Natural killer cell (primary cell): ENCODE measurements at regions of chr15 and their contacts with region 1.

Region 1: DNA sequence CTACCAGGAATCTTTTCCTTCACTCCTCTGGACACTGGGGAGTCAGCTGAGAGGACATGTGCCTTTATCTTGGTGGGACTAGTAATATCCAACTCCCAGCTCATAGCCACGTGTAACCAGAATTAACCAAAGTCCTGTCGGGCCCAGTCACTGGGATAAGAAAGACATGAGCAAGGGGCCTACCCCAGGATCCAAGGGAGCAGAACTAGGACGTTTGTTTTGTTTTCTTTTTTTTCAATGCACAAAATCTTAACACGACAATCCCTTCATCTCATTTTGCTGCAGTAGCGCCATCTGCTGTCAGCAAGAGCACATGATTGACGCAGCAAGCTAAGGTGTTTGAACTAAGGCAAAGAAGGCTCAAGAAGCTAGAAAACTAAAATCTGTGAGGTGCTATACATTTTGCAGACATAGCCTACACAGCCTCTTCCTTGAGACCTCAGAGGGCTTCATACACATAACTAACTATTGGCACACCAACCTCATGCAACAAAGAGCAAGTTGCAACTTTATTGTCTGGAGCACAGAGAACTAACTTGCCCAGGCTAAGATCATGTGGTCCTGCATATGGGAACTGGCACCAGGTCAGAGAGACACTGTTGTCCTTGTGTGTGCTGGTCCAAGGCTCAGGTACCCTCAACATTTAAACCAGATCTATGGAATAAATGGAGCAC is 43.6 kb downstream of the RLBP1 start:
- DNase-seq: peak; percentile 59 to 85
- ATAC-seq: peak; percentile 59 to 61 (median 60)
- H3K4me3 ChIP-seq: no peak overlapping the region
- H3K4me3 Mint-ChIP-seq: no peak overlapping the region
- H3K27ac ChIP-seq: no peak overlapping the region
- H3K27ac Mint-ChIP-seq: peak overlapping the region; percentile 49 to 85
- H3K4me1 ChIP-seq: peaks cover 37% of the 10 kb centered on the region
- H3K4me1 Mint-ChIP-seq: peaks cover 19 to 55% of the 10 kb centered on the region in 2 donors
- H3K27me3 ChIP-seq: no peaks in the 10 kb centered on the region
- H3K27me3 Mint-ChIP-seq: no peaks in the 10 kb centered on the region
- CTCF ChIP-seq: peak; percentile 90

Region 2: GRCh38 chr15:88904624-88905327 is 273.0 kb before region 1 on chr15:
- intact Hi-C with region 1: loop called (anchors 2 kb)
- DNase-seq: peak; percentile 74 to 97
- ATAC-seq: peak; percentile 87 to 95 (median 90)
- H3K4me3 ChIP-seq: no peak overlapping the region
- H3K4me3 Mint-ChIP-seq: no peak overlapping the region
- H3K27ac ChIP-seq: peak overlapping the region; percentile 54
- H3K27ac Mint-ChIP-seq: no peak overlapping the region
- H3K4me1 ChIP-seq: peaks cover 15% of the 10 kb centered on the region
- H3K4me1 Mint-ChIP-seq: peaks cover 7 to 14% of the 10 kb centered on the region in 2 donors
- H3K27me3 ChIP-seq: no peaks in the 10 kb centered on the region
- H3K27me3 Mint-ChIP-seq: no peaks in the 10 kb centered on the region
- CTCF ChIP-seq: peak; percentile 98

Region 3: DNA sequence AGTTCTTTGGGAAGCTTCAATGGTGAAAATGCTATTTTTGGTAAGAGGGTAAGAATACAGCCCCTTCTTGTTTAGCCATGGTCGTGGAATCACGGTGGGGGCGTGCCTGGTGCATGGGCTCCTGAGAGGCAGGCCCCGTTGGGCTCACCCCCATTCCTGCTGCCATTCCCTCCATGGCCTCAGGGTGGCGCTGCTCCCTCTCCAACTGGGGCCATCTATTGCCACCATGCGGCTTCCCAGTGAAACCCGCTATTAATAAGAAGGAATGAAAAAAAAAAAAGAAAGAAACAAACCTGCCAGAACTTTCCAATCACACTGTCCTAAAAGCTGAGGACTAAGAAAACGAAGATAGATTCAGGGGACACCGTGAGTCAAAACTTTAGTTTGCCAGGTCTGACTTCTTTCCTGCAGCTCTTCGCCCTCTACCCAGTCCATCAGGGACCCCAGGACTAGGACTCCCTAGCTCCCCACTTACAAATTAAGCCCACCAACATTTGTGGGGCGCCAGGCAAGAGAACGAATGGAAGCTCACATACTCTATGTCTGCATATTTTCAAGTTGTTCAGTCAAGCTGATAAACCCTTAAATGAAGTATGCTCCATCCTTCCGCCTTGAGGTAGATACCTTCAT is 120.2 kb before region 1 on chr15:
- intact Hi-C with region 1: loop called (anchors 1 kb)
- DNase-seq: peak; percentile 89
- ATAC-seq: peak; percentile 95 to 100 (median 100)
- H3K4me3 ChIP-seq: no peak overlapping the region
- H3K4me3 Mint-ChIP-seq: no peak overlapping the region
- H3K27ac ChIP-seq: no peak overlapping the region
- H3K27ac Mint-ChIP-seq: no peak overlapping the region
- H3K4me1 ChIP-seq: peaks cover 9% of the 10 kb centered on the region
- H3K4me1 Mint-ChIP-seq: peaks cover 8 to 10% of the 10 kb centered on the region in 2 donors
- H3K27me3 ChIP-seq: no peaks in the 10 kb centered on the region
- H3K27me3 Mint-ChIP-seq: no peaks in the 10 kb centered on the region
- CTCF ChIP-seq: peak; percentile 99

Region 4: GRCh38 chr15:89101302-89102191 is 76.2 kb before region 1 on chr15:
- intact Hi-C with region 1: loop called (anchors 10 kb)
- DNase-seq: no peak
- ATAC-seq: peak; percentile 84 to 92 (median 86)
- H3K4me3 ChIP-seq: no peak overlapping the region
- H3K4me3 Mint-ChIP-seq: peak overlapping the region; percentile 68
- H3K27ac ChIP-seq: peak overlapping the region; percentile 48
- H3K27ac Mint-ChIP-seq: peak overlapping the region; percentile 19 to 89
- H3K4me1 ChIP-seq: peaks cover 18% of the 10 kb centered on the region
- H3K4me1 Mint-ChIP-seq: peaks cover 48 to 53% of the 10 kb centered on the region in 2 donors
- H3K27me3 ChIP-seq: no peaks in the 10 kb centered on the region
- H3K27me3 Mint-ChIP-seq: no peaks in the 10 kb centered on the region
- CTCF ChIP-seq: no peak

Region 5: DNA sequence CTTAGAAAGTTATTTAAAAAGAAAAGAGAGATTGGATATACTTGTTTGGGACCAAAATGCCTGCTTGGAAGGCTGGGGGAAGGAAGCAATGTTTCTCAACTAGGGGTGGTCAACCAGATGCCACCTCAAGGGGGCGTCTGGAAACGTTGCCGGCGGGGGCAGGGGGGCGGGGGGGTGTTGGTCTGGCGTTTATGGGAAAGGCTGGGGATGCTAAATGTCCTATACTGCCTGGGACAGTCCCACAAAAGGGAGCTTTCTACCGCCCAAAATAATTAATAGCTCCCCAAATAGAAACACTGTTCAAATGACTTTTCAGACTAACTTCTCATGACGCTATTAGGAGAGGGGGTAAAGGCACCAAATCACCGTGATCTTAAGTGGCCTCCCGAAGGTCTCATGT is 154.7 kb after region 1 on chr15:
- intact Hi-C with region 1: no loop called
- DNase-seq: peak in 1 of 2 donors; percentile 59
- ATAC-seq: no peak
- H3K4me3 ChIP-seq: no peak overlapping the region
- H3K4me3 Mint-ChIP-seq: peak overlapping the region; percentile 85
- H3K27ac ChIP-seq: no peak overlapping the region
- H3K27ac Mint-ChIP-seq: peak overlapping the region; percentile 83 to 89
- H3K4me1 ChIP-seq: peaks cover 67% of the 10 kb centered on the region
- H3K4me1 Mint-ChIP-seq: peaks cover 63 to 66% of the 10 kb centered on the region in 2 donors
- H3K27me3 ChIP-seq: no peaks in the 10 kb centered on the region
- H3K27me3 Mint-ChIP-seq: peaks cover 0 to 3% of the 10 kb centered on the region in 2 donors
- CTCF ChIP-seq: peak; percentile 15

Region 6: GRCh38 chr15:89472785-89473256 is 295.1 kb after region 1 on chr15:
- intact Hi-C with region 1: no loop called
- DNase-seq: peak in 1 of 2 donors; percentile 38
- ATAC-seq: peak in 2 of 3 donors; percentile 52 to 64
- H3K4me3 ChIP-seq: no peak overlapping the region
- H3K4me3 Mint-ChIP-seq: no peak overlapping the region
- H3K27ac ChIP-seq: no peak overlapping the region
- H3K27ac Mint-ChIP-seq: no peak overlapping the region
- H3K4me1 ChIP-seq: no peaks in the 10 kb centered on the region
- H3K4me1 Mint-ChIP-seq: peaks cover 0 to 9% of the 10 kb centered on the region in 2 donors
- H3K27me3 ChIP-seq: peaks cover 8% of the 10 kb centered on the region
- H3K27me3 Mint-ChIP-seq: peaks cover 11 to 25% of the 10 kb centered on the region in 2 donors
- CTCF ChIP-seq: no peak